Activated naive CD4-positive, alpha-beta T cell treated with anti-CD3 and anti-CD28 coated beads for 36 hours (primary cell): ENCODE measurements at regions of chrX and their contacts with region 1.

Region 1: DNA sequence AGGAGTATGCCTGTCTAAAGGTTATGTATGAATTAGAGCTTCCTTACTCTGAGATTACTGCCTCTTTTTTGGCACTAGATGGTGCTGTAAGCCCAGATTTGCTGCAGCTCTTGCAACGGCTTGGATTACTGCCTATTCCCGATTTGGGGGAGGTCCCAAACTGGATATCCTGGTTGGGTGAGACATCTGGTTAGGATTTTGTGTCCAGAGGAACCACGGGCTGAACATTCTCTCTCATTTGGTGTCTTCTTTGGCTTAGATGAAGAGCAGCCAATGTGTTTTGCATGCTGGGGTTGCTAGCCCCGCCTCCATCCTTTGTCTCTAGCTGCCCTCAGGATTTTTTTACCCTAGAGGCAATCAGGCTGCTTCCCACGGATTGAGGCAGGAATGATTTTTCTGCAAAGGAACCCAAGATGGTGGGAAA is 31.9 kb downstream of the F8A1 start:
- DNase-seq: peak; percentile 19
- H3K4me3 Mint-ChIP-seq: peak overlapping the region; percentile 55
- H3K27ac Mint-ChIP-seq: no peak overlapping the region
- H3K4me1 Mint-ChIP-seq: no peaks in the 10 kb centered on the region
- H3K27me3 Mint-ChIP-seq: no peaks in the 10 kb centered on the region

Region 2: GRCh38 chrX:154471839-154472687 is 446.0 kb before region 1 on chrX:
- CTCF ChIA-PET with region 1: no interaction called
- intact Hi-C with region 1: no loop called
- DNase-seq: no peak
- H3K4me3 Mint-ChIP-seq: no peak overlapping the region
- H3K27ac Mint-ChIP-seq: no peak overlapping the region
- H3K4me1 Mint-ChIP-seq: peaks cover 11% of the 10 kb centered on the region
- H3K27me3 Mint-ChIP-seq: no peaks in the 10 kb centered on the region

Region 3: GRCh38 chrX:155056877-155057792 is 139.1 kb after region 1 on chrX:
- CTCF ChIA-PET with region 1: interaction called, 11 read pairs
- intact Hi-C with region 1: loop called (anchors 5 kb)
- DNase-seq: peak; percentile 57
- H3K4me3 Mint-ChIP-seq: peak overlapping the region; percentile 48
- H3K27ac Mint-ChIP-seq: peak overlapping the region; percentile 53
- H3K4me1 Mint-ChIP-seq: peaks cover 29% of the 10 kb centered on the region
- H3K27me3 Mint-ChIP-seq: no peaks in the 10 kb centered on the region

Region 4: GRCh38 chrX:155086202-155086840 is 168.2 kb after region 1 on chrX:
- CTCF ChIA-PET with region 1: interaction called, 9 read pairs
- intact Hi-C with region 1: loop called (anchors 1 kb)
- DNase-seq: peak; percentile 51
- H3K4me3 Mint-ChIP-seq: no peak overlapping the region
- H3K27ac Mint-ChIP-seq: no peak overlapping the region
- H3K4me1 Mint-ChIP-seq: no peaks in the 10 kb centered on the region
- H3K27me3 Mint-ChIP-seq: no peaks in the 10 kb centered on the region

Region 5: DNA sequence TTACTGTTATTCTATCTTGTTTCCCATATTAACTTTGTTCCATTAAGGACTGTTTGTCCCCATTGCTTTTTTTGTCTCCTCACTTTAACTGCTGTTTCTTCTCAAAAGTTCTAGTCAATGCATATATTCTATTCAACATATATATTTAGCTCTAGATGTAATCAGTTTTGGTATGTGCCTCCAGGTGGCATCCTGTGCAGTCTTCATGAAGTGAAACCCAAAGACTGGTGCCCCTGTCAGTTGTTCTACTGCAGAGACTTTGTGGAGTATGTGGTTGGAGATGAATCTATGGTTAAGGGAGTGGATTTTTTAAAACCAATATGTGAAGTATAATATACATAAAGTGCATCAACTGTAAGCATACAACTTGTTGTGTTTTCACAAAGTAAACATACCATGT is 1020.1 kb after region 1 on chrX:
- CTCF ChIA-PET with region 1: no interaction called
- intact Hi-C with region 1: no loop called
- DNase-seq: no peak
- H3K4me3 Mint-ChIP-seq: no peak overlapping the region
- H3K27ac Mint-ChIP-seq: no peak overlapping the region
- H3K4me1 Mint-ChIP-seq: no peaks in the 10 kb centered on the region
- H3K27me3 Mint-ChIP-seq: no peaks in the 10 kb centered on the region